Activated naive CD4-positive, alpha-beta T cell treated with anti-CD3 and anti-CD28 coated beads for 36 hours (primary cell): ENCODE measurements at regions of chr2 and their contacts with region 1.

Region 1: DNA sequence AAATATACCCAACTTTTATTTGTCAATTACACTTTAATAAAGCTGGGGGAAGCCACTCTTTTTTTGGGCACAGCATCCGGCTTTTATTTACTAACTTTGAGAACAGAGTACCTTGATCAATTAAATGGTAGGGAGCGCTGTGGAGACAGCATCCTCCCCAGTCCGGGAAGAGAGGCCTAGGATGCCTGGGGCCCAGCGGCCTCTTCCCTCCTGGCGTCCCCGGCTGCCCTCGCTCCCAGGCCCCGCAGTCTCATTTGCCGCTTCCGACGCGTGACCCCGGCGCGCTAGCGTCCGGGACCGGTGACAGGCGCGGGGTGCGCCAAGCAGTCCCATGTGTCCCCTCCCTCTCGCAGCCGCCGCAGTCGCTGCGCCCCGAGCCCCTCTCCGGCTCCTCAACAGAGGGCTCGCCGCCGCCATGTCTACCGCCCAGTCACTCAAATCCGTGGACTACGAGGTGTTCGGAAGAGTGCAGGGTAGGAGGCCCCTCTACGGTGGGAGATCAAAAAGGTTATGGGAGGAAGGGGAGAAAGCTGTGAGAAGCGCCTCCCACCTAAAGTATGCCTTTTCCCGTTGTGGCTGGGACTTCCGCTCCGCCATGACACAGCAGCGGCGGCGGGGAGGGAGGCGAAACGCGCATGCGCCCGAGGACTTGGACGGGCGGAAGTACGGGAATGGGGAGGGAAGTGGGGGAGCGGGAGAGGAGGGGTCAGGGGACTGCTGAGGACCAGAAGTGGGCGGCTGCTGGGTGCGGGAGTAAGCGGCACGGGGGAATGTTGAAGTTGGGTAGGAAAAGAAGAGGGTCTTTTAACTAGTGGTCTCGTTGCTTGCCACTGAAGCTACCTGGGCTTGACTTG is at the start of gene ACYP2:
- DNase-seq: peak; percentile 95
- H3K4me3 Mint-ChIP-seq: peak within 1 kb of the TSS; percentile 97
- H3K27ac Mint-ChIP-seq: peak within 1 kb of the TSS; percentile 100
- H3K4me1 Mint-ChIP-seq: peaks cover 11% of the 10 kb centered on the region
- H3K27me3 Mint-ChIP-seq: no peaks in the 10 kb centered on the region
- total RNA-seq, gene ACYP2: 6.8 to 7.3 TPM

Region 2: DNA sequence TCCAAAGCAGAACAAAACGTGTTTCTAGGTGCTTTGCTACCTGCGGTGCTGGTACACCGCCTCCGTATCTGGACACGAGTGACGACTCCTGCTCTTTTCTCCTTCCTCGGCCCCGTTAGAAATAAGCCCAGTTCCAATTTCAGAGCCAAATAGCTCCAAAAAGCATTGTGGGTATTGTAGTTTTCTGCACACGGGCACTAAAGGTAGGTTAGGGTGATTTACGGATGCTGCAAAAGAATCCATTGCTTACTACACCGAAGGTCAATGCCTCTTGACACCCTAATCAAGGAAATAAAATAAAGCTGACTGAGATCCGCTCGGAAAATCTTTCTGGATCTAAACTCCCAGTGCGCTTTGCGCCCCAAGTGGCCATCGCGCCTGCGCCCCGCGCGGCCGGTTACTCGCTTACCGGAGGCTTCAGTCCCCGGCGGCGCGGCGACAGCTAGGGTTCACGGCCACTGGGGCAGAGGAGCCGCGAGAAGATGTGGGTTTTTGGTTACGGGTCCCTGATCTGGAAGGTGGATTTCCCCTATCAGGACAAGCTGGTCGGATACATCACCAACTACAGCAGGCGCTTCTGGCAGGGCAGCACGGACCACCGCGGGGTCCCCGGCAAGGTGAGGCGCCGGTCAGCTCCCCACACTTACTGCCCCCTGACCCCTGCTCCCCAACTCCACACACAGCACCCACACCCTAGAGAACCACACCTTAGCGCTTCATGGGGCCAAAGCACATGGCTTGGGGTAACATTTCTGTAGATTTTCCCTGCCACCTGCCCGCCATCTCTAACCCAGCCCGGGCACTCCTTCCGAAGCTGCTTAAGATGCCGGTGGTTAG is 347.9 kb before region 1 on chr2 and contains the start of gene CHAC2:
- CTCF ChIA-PET with region 1: no interaction called
- intact Hi-C with region 1: loop called (anchors 1 kb)
- DNase-seq: peak; percentile 91
- H3K4me3 Mint-ChIP-seq: peak within 1 kb of the TSS; percentile 94
- H3K27ac Mint-ChIP-seq: peak within 1 kb of the TSS; percentile 93
- H3K4me1 Mint-ChIP-seq: peaks cover 26% of the 10 kb centered on the region
- H3K27me3 Mint-ChIP-seq: no peaks in the 10 kb centered on the region
- total RNA-seq, gene CHAC2: 11.5 to 12.4 TPM

Region 3: DNA sequence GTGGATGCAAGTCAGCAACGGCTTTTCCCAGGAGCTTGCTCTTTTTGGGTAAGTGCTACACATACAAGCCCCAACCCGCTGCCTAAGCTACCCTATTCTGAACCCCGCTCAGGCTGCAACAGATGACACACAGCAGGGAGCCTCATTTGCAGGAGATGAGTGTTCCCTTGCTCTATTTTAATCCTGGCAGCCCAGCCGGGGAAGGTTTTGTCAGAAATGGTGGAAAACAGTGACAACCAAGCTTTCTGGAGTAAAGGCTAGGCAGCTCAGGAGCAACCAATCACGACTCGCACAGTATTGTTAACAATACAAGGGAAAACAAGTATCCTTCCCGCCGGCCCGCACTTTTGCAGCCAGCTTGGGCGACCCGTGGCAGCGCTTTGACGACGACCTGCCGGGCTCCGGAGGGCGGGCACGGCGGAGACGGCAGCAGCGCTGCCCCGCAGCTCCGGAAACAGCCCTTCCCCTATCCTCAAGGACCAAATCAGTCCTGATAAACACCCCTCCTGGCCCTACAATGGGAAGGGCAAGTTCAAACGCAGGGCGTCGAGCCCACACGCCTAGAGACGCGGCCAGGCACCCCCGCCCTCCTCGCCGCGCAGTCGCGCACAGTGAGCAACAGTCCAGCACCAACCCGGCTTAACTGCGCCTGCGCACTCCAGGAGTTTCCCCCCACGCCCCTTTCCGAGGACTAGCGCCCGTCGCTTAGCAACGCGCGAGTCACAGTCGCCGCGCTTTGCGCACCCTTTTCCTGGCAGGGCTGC is 214.8 kb after region 1 on chr2:
- CTCF ChIA-PET with region 1: no interaction called
- intact Hi-C with region 1: loop called (anchors 1 kb)
- DNase-seq: peak; percentile 93
- H3K4me3 Mint-ChIP-seq: peak overlapping the region; percentile 83
- H3K27ac Mint-ChIP-seq: no peak overlapping the region
- H3K4me1 Mint-ChIP-seq: peaks cover 17% of the 10 kb centered on the region
- H3K27me3 Mint-ChIP-seq: peaks cover 6% of the 10 kb centered on the region

Region 4: DNA sequence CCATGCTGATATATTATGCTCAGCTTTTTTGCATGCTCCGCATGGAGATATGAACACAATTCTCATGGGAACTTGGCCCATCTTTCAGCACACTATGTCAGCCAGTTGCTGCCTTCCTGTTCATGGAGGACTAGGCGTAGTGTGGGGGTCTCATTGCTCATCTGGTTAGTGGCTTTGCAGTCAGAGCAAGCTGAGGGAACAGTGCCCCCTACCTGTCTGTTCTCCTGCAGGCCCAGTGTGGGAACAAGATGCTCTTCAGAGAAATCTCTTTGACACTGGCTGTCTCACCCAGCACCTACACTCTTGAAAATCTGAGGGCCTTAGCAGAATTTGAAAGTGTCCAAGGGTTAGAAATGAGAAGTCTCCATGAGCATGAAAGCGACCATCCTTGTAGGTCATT is 387.7 kb after region 1 on chr2:
- CTCF ChIA-PET with region 1: no interaction called
- intact Hi-C with region 1: loop called (anchors 2 kb)
- DNase-seq: peak; percentile 64
- H3K4me3 Mint-ChIP-seq: no peak overlapping the region
- H3K27ac Mint-ChIP-seq: no peak overlapping the region
- H3K4me1 Mint-ChIP-seq: no peaks in the 10 kb centered on the region
- H3K27me3 Mint-ChIP-seq: no peaks in the 10 kb centered on the region

Region 5: GRCh38 chr2:55223958-55224760 is 1108.6 kb after region 1 on chr2:
- CTCF ChIA-PET with region 1: no interaction called
- intact Hi-C with region 1: loop called (anchors 5 kb)
- DNase-seq: no peak
- H3K4me3 Mint-ChIP-seq: peak overlapping the region; percentile 71
- H3K27ac Mint-ChIP-seq: peak overlapping the region; percentile 68
- H3K4me1 Mint-ChIP-seq: peaks cover 36% of the 10 kb centered on the region
- H3K27me3 Mint-ChIP-seq: no peaks in the 10 kb centered on the region